ENCODE measurements at regions of chr11 and their contacts with region 1.

Region 1: DNA sequence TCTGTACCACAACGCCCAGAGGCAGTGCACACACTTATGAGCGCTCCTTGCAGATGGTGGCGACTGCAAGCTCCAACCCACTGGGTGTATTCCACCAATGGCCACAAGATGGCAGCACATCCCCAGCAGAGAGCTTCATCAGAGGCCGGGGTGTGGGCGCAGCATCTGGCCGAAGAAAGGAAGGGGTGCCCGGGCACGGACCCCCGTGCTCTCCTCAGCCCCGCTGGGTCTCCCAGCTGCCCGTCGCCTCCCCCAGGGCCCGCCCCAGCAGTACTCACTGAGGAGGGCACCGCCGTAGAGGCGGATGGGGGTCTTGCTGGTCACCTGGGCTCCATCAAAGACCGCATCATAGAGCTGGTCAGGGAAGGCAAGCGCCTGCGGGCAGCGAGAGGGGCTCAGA is 14.2 kb downstream of the TP53I11 start:
- DNase-seq: peak; percentile 82
- H3K4me3 ChIP-seq: no peak overlapping the region
- H3K27ac ChIP-seq: no peak overlapping the region
- H3K4me1 ChIP-seq: no peaks in the 10 kb centered on the region
- H3K27me3 ChIP-seq: no peaks in the 10 kb centered on the region
- CTCF ChIP-seq: peak; percentile 78 to 91
- POLR2A ChIP-seq: no peak

Region 2: DNA sequence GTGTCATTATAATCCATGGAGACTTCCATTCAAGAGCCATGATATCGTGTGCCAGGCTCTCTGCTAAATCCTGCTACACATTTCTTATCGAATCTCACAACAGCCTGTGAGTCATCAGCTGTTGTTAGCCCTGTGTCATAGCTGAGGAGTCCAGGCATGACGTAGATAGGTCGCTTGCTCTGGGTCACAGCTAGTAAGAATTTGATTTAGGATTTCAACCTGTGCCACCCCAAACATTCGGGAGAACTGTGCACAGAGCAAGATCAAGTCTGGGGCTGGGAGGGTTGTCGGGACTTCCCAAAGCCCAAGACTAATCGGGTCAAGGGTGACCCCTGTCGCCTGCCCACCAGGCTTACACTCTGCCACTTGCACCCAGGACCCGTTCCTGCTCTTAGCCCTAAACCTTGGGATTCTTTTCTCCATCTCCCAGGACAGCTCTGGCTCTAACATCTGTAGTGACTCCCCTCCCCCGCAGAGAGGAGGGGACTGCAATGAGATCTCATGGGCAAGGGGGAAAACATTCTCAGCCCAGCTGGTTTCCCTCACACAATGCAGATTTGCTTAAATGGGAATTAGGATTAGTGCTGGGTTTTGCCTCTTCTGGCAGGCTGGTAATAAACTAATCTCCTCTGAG is 175.5 kb before region 1 on chr11:
- CTCF ChIA-PET with region 1: no interaction called
- POLR2A ChIA-PET with region 1: no interaction called
- dilution Hi-C with region 1: no loop called
- intact Hi-C with region 1: no loop called
- DNase-seq: peak; percentile 92
- H3K4me3 ChIP-seq: no peak overlapping the region
- H3K27ac ChIP-seq: peak overlapping the region; percentile 21
- H3K4me1 ChIP-seq: peaks cover 33% of the 10 kb centered on the region
- H3K27me3 ChIP-seq: no peaks in the 10 kb centered on the region
- CTCF ChIP-seq: peak in 1 of 2 donors; percentile 21
- POLR2A ChIP-seq: no peak

Region 3: DNA sequence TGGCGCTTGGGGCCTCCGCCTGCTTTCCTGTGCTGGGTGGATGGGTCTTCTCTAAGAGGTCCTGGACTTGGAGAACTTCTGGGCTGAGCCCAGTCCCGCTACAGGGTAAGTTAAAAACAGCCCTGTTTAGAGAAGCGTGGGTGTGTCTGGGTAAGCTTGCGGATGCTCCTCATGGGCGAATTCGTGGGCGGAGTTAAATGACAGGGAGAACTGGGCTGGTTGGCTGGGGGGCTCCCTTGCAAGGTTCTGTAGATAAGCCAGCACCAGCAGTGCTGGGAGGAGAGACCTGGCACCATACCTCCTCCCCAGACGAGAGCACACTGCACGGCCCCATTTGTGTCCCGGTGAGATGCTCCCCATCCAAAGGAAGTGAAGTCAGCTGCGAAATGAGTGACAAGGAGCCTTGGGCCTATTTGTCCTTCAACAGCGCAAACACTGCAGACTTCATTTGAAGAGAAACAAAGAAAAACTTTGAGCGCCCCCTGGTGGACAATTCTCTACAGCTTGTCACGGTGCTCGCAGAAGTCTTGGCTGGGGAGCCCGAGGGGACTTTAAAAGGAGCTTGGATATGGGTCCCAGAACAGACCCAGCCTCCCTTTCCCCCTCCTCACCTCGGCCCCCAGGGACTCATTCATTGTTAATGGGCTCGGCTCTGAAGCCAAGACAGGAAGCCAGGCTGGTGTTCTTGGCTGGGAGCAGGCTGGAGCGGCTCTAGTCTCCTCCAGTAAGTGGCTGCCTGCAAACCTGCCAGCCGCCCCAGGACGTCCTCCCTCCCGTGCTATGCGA is 25.3 kb before region 1 on chr11:
- CTCF ChIA-PET with region 1: interaction called, 10 read pairs
- POLR2A ChIA-PET with region 1: no interaction called
- dilution Hi-C with region 1: no loop called
- intact Hi-C with region 1: no loop called
- DNase-seq: peak; percentile 80
- H3K4me3 ChIP-seq: no peak overlapping the region
- H3K27ac ChIP-seq: no peak overlapping the region
- H3K4me1 ChIP-seq: peaks cover 2% of the 10 kb centered on the region
- H3K27me3 ChIP-seq: no peaks in the 10 kb centered on the region
- CTCF ChIP-seq: peak; percentile 73 to 88
- POLR2A ChIP-seq: no peak

Region 4: DNA sequence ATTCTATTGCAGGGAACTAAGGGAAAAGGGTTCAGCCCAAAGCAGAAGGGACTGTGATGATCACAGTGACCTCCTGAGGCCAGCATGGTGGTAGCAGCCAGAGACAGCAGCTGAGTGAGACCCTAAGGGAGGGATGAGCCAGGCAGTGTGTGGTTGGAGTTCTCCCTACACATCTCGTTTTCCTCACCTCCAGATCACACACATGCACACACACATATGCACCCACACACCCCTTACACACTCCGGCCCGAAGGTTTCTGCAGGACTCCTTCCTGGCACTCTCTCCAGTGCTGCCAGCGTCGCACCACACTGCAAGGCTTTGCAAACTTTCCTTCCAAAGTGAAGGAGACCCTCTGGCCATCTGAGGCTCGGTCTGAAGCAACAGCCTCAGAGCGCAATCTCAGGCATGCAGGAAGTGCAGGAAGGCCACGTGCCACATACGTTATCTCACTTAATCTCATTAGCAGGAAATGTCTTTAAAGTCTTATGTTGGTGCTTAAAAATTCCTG is 41.0 kb after region 1 on chr11:
- CTCF ChIA-PET with region 1: interaction called, 16 read pairs
- POLR2A ChIA-PET with region 1: no interaction called
- dilution Hi-C with region 1: no loop called
- intact Hi-C with region 1: loop called (anchors 5 kb)
- DNase-seq: peak; percentile 54
- H3K4me3 ChIP-seq: no peak overlapping the region
- H3K27ac ChIP-seq: peak overlapping the region; percentile 14
- H3K4me1 ChIP-seq: peaks cover 42% of the 10 kb centered on the region
- H3K27me3 ChIP-seq: no peaks in the 10 kb centered on the region
- CTCF ChIP-seq: peak; percentile 12 to 15
- POLR2A ChIP-seq: no peak

Region 5: GRCh38 chr11:45025716-45026492 is 89.4 kb after region 1 on chr11:
- CTCF ChIA-PET with region 1: interaction called, 20 read pairs
- POLR2A ChIA-PET with region 1: no interaction called
- dilution Hi-C with region 1: no loop called
- intact Hi-C with region 1: no loop called
- DNase-seq: peak; percentile 98
- H3K4me3 ChIP-seq: no peak overlapping the region
- H3K27ac ChIP-seq: peak overlapping the region; percentile 67
- H3K4me1 ChIP-seq: peaks cover 14% of the 10 kb centered on the region
- H3K27me3 ChIP-seq: peaks cover 3 to 11% of the 10 kb centered on the region in 2 experiments
- CTCF ChIP-seq: no peak
- POLR2A ChIP-seq: no peak

Region 6: DNA sequence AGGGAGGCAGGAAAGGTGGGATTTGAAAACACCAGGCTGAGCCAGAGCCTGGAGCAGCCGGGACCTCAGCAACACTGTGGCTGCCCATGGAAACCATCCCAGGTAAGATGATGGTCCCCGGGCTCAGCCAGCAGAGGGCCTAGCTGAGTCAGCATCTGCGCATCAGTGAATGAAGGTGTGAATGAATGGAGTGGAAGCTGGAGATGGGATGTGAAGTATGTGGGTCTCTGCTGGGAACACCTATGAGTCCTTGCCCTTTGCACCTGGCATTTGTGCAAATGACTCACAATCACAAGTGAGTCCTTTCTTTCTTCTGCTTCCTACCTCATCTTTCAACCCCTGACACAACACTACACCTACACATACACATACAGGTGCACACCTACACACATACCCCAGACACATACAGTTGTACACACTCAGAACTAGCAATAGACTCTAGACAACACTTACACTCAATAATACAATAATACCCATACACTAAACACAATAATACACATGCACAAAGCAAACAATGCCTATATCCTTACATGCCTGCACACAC is 147.1 kb after region 1 on chr11:
- CTCF ChIA-PET with region 1: interaction called, 18 read pairs
- POLR2A ChIA-PET with region 1: no interaction called
- dilution Hi-C with region 1: no loop called
- intact Hi-C with region 1: no loop called
- DNase-seq: no peak
- H3K4me3 ChIP-seq: no peak overlapping the region
- H3K27ac ChIP-seq: no peak overlapping the region
- H3K4me1 ChIP-seq: no peaks in the 10 kb centered on the region
- H3K27me3 ChIP-seq: peaks cover 5 to 7% of the 10 kb centered on the region in 2 experiments
- CTCF ChIP-seq: peak in 1 of 2 donors; percentile 32
- POLR2A ChIP-seq: no peak

Region 7: GRCh38 chr11:45110562-45110961 is 174.0 kb after region 1 on chr11:
- CTCF ChIA-PET with region 1: interaction called, 1,618 read pairs
- POLR2A ChIA-PET with region 1: interaction called, 10 read pairs
- dilution Hi-C with region 1: no loop called
- intact Hi-C with region 1: no loop called
- DNase-seq: peak; percentile 64
- H3K4me3 ChIP-seq: no peak overlapping the region
- H3K27ac ChIP-seq: no peak overlapping the region
- H3K4me1 ChIP-seq: no peaks in the 10 kb centered on the region
- H3K27me3 ChIP-seq: peaks cover 6 to 7% of the 10 kb centered on the region in 2 experiments
- CTCF ChIP-seq: peak; percentile 52 to 68
- POLR2A ChIP-seq: no peak

Region 8: GRCh38 chr11:45332276-45332934 is 395.9 kb after region 1 on chr11:
- CTCF ChIA-PET with region 1: interaction called, 4 read pairs
- POLR2A ChIA-PET with region 1: no interaction called
- dilution Hi-C with region 1: no loop called
- intact Hi-C with region 1: loop called (anchors 1 kb)
- DNase-seq: peak; percentile 51
- H3K4me3 ChIP-seq: no peak overlapping the region
- H3K27ac ChIP-seq: no peak overlapping the region
- H3K4me1 ChIP-seq: peaks cover 10% of the 10 kb centered on the region
- H3K27me3 ChIP-seq: peaks cover 1% of the 10 kb centered on the region in 2 experiments
- CTCF ChIP-seq: peak; percentile 25 to 64
- POLR2A ChIP-seq: no peak